ENCODE measurements at regions of chrX and their contacts with region 1.

Region 1: GRCh38 chrX:80430826-80431504 is 10.7 kb downstream of the TENT5D start:
- DNase-seq: no peak
- H3K4me3 ChIP-seq: no peak overlapping the region
- H3K27ac ChIP-seq: no peak overlapping the region
- H3K4me1 ChIP-seq: no peaks in the 10 kb centered on the region
- H3K27me3 ChIP-seq: no peaks in the 10 kb centered on the region
- CTCF ChIP-seq: peak in 1 of 2 donors; percentile 24

Region 2: DNA sequence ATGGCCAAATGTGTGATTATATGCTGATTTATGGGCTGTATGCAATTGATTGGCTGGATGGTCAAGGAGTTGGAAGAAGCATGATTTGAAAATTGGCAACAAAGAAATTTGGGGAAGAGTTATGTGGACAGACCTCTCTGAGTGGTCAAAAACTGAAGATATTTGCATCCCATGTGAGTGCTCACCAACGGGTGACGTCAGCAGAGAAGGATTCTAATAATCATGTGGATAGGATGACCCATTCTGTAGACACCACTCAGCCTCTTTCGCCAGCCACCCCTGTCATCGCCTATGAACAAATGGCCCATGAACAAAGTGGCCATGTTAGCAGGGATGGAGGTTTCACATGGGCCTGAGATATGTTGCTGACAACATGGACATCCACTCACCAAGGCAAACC is 92.7 kb after region 1 on chrX:
- CTCF ChIA-PET with region 1: no interaction called
- dilution Hi-C with region 1: no loop called
- in situ Hi-C with region 1: no loop called
- intact Hi-C with region 1: no loop called
- DNase-seq: no peak
- H3K4me3 ChIP-seq: no peak overlapping the region
- H3K27ac ChIP-seq: no peak overlapping the region
- H3K4me1 ChIP-seq: no peaks in the 10 kb centered on the region
- H3K27me3 ChIP-seq: no peaks in the 10 kb centered on the region
- CTCF ChIP-seq: no peak

Region 3: DNA sequence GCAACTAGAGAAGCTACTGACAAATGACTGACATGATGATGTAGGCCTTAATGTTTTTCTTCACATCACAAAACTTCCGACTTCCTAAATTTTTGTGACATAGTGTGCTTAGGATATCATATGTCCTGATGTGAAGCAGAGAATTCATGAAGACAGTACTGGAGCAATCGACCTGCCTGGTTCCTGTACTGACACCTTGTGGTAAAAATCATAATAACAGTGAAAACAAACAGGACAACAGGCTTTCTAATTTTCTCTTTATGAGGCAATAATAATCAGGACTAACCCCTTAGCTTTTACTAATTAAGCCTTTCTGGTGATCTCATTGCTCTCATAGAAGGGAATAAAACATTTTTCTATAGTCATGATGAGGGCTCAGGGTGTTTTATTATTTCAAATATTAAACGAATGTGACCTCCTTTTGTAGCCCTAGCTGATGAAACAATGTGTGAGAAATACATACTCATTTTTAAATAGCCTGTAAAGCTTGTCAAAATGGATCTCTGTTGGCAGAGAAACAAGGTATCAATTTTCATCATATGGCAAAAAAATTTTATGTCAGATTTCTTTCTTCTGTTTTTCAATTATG is 147.6 kb after region 1 on chrX:
- CTCF ChIA-PET with region 1: no interaction called
- dilution Hi-C with region 1: no loop called
- in situ Hi-C with region 1: no loop called
- intact Hi-C with region 1: loop called (anchors 1 kb)
- DNase-seq: peak; percentile 12
- H3K4me3 ChIP-seq: no peak overlapping the region
- H3K27ac ChIP-seq: no peak overlapping the region
- H3K4me1 ChIP-seq: no peaks in the 10 kb centered on the region
- H3K27me3 ChIP-seq: no peaks in the 10 kb centered on the region
- CTCF ChIP-seq: peak; percentile 57 to 65

Region 4: GRCh38 chrX:80648023-80648422 is 217.1 kb after region 1 on chrX:
- CTCF ChIA-PET with region 1: no interaction called
- dilution Hi-C with region 1: no loop called
- in situ Hi-C with region 1: no loop called
- intact Hi-C with region 1: loop called (anchors 5 kb)
- DNase-seq: no peak
- H3K4me3 ChIP-seq: no peak overlapping the region
- H3K27ac ChIP-seq: no peak overlapping the region
- H3K4me1 ChIP-seq: no peaks in the 10 kb centered on the region
- H3K27me3 ChIP-seq: no peaks in the 10 kb centered on the region
- CTCF ChIP-seq: peak; percentile 48 to 56

Measured in mammary epithelial cell (primary cell).